Activated CD4-positive, alpha-beta T cell treated with anti-CD3 and anti-CD28 coated beads for 36 hours (primary cell): ENCODE measurements at regions of chr3 and their contacts with region 1.

Region 1: DNA sequence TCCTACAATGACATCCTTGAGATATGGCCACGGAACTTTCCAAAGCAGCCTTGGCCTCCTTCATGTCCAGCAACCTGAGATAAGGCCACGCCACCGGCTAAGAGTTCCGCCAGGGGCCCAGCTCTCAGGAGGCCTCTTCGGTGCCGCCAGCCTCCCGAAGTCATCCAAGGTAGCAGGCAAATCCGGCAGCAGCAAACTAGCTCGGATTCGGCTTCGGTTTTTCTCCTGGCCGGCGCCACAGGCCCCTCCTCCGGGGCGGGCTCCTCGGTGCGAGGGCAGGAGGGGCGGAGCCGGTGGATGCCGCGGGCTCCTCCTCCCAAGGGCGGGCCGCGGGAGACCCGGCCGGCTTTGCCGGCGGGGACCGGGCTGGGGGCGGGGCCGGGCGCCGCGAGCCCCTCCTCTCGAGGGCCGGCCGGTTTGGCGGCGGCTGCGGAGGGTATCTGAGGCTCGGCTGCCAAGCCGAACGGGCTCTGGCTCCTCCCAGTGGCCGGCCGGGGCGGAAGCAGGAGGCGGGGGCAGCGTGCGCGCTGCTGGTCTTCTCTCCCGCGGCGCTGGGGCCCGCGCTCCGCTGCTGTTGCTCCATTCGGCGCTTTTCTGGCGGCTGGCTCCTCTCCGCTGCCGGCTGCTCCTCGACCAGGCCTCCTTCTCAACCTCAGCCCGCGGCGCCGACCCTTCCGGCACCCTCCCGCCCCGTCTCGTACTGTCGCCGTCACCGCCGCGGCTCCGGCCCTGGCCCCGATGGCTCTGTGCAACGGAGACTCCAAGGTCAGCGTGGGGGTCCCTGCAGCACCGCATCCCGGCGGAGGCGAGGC is at the start of gene GMPS:
- DNase-seq: peak; percentile 97
- ATAC-seq: peak; percentile 93
- H3K4me3 Mint-ChIP-seq: peak within 1 kb of the TSS; percentile 99
- H3K27ac Mint-ChIP-seq: peak within 1 kb of the TSS; percentile 98
- H3K4me1 Mint-ChIP-seq: peaks cover 20% of the 10 kb centered on the region
- H3K27me3 Mint-ChIP-seq: no peaks in the 10 kb centered on the region
- total RNA-seq, gene GMPS: 154 to 161 TPM

Region 2: GRCh38 chr3:154323891-154324738 is 1546.2 kb before region 1 on chr3 and contains the start of gene DHX36:
- CTCF ChIA-PET with region 1: no interaction called
- POLR2A ChIA-PET with region 1: no interaction called
- intact Hi-C with region 1: loop called (anchors 1 to 2 kb)
- DNase-seq: peak; percentile 93
- ATAC-seq: peak; percentile 91
- H3K4me3 Mint-ChIP-seq: peak within 1 kb of the TSS; percentile 85
- H3K27ac Mint-ChIP-seq: peak within 1 kb of the TSS; percentile 97
- H3K4me1 Mint-ChIP-seq: peaks cover 25% of the 10 kb centered on the region
- H3K27me3 Mint-ChIP-seq: no peaks in the 10 kb centered on the region
- total RNA-seq, gene DHX36: 56.3 to 74.6 TPM

Region 3: DNA sequence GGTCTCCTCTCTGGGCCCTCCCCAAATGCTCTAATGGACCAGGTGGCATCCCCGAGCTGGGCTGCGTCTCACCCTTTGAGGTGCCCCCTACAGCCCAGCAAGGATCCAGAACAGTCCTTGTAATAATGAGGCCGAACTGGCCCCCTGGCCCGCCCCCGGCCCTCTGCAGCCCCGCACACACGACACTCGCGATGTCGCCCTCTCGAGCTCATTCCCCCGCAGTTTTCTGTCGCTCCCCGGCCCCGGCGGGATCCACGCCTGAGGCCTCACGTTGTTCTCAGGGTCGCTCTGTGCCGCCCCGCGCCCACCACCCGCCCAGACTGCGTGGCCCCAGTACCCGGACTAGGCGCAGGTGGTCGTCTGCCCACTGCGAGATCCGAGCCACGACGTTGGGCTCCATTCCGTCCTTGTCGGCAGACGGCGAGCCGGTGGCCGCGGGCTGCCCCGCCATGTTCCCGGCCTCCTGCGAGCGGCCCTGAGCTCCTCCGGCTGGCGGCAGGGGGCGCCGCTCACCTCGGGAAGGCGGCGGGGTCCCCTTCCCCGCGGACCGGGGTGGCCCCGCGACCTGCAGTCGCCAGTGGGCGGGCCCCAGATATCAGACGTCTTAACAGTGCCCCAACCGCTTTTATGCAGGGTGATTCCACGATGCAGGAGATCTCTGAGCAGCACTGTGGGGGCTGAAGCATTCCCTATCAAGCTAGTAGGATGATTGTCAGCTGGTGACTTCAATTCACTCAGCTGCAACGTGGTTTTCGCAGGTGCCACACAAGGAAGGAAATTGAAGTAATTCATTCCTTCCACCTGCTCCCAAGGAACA is 64.3 kb before region 1 on chr3 and contains the start of gene C3orf33:
- CTCF ChIA-PET with region 1: interaction called, 18 read pairs
- POLR2A ChIA-PET with region 1: interaction called, 19 read pairs
- intact Hi-C with region 1: loop called (anchors 1 to 2 kb)
- DNase-seq: peak; percentile 87
- ATAC-seq: peak; percentile 98
- H3K4me3 Mint-ChIP-seq: peak within 1 kb of the TSS; percentile 81
- H3K27ac Mint-ChIP-seq: peak within 1 kb of the TSS; percentile 84
- H3K4me1 Mint-ChIP-seq: peaks cover 10% of the 10 kb centered on the region
- H3K27me3 Mint-ChIP-seq: peaks cover 9% of the 10 kb centered on the region
- total RNA-seq, gene C3orf33: 1.5 to 1.6 TPM

Region 4: GRCh38 chr3:155890671-155891190 is 20.4 kb after region 1 on chr3:
- CTCF ChIA-PET with region 1: interaction called, 3 read pairs
- POLR2A ChIA-PET with region 1: no interaction called
- intact Hi-C with region 1: loop called in 1 of 2 experiments (anchors 1 kb)
- DNase-seq: no peak
- ATAC-seq: no peak
- H3K4me3 Mint-ChIP-seq: no peak overlapping the region
- H3K27ac Mint-ChIP-seq: no peak overlapping the region
- H3K4me1 Mint-ChIP-seq: peaks cover 42% of the 10 kb centered on the region
- H3K27me3 Mint-ChIP-seq: no peaks in the 10 kb centered on the region

Region 5: GRCh38 chr3:157088601-157089454 is 1218.5 kb after region 1 on chr3:
- CTCF ChIA-PET with region 1: no interaction called
- POLR2A ChIA-PET with region 1: interaction called, 5 read pairs
- intact Hi-C with region 1: loop called in 1 of 2 experiments (anchors 1 kb)
- DNase-seq: peak; percentile 97
- ATAC-seq: peak; percentile 79
- H3K4me3 Mint-ChIP-seq: peak overlapping the region; percentile 72
- H3K27ac Mint-ChIP-seq: peak overlapping the region; percentile 97
- H3K4me1 Mint-ChIP-seq: peaks cover 71% of the 10 kb centered on the region
- H3K27me3 Mint-ChIP-seq: peaks cover 1% of the 10 kb centered on the region